ENCODE measurements at regions of chr16 and their contacts with region 1.

Region 1: GRCh38 chr16:6957681-6958080 is 375.0 kb upstream of the RBFOX1 start:
- ATAC-seq: peak in 4 of 8 experiments; percentile 40 to 97 (median 85)
- H3K4me3 ChIP-seq: no peak overlapping the region
- H3K27ac ChIP-seq: peak overlapping the region in 1 of 2 donors; percentile 74
- H3K4me1 ChIP-seq: peaks cover 0 to 27% of the 10 kb centered on the region in 2 donors

Region 2: DNA sequence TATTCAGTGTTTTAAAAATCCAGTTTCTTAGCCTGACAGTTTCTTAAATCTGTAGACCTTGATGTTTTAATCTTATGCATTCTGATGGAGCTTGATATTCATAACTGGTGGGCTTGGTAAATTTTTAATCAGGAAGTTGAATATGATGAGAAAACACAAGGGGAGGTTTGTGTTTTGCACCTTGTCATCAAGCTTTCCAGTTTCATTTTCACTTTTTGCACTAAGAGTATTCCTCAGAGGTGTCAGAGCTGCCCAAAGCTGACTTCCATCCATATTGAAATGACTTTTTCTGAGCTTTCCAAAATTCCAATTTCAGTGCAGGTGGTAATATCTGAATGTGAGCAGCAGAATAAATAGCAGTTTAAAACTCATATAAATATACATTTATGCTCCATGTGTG is 180.1 kb before region 1 on chr16:
- in situ Hi-C with region 1: no loop called
- ATAC-seq: no peak
- H3K4me3 ChIP-seq: no peak overlapping the region
- H3K27ac ChIP-seq: no peak overlapping the region
- H3K4me1 ChIP-seq: peaks cover 0 to 2% of the 10 kb centered on the region in 2 donors

Region 3: GRCh38 chr16:7055443-7055842 is 97.8 kb after region 1 on chr16:
- in situ Hi-C with region 1: loop called in 1 of 9 experiments (anchors 25 kb)
- ATAC-seq: no peak
- H3K4me3 ChIP-seq: no peak overlapping the region
- H3K27ac ChIP-seq: no peak overlapping the region
- H3K4me1 ChIP-seq: peaks cover 0 to 6% of the 10 kb centered on the region in 2 donors

Measured in motor neuron (in vitro differentiated cells).